GM18951 (cell line): ENCODE measurements at regions of chr20 and their contacts with region 1.

Region 1: DNA sequence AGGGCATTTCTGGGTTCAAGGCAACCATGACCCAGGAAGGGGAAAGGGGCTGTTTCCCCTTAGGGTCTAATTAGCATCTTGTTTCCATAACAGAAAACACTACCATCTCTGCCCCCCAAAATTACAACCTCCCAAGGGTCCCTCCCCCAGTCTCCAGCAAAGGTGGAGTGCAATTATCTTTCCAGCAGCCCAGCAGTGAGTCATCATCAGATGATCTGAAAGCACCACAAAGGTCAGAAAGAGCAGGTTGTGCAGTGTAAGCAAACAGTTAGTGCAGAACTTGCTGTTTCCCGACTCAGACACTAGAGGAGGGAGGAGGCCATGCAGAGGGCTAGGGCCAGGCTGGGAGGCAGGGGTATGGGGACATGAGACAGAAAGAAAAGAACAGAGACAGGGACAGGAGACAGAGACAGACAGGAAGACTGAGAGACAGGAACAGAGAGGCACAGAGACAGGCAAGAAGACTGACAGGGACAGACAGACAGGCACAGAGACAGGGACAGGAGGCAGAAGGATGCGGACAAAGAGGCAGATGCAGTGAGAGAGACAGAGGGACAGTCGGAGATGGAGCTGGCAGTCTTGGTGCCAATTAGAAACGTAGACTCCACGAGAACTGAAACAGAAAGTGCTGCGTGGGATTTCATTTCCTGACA is 62.5 kb downstream of the PYGB start:
- POLR2A ChIP-seq: peak; percentile 31

Region 2: GRCh38 chr20:25399037-25399430 is 88.6 kb after region 1 on chr20:
- in situ Hi-C with region 1: loop called (anchors 5 kb)
- POLR2A ChIP-seq: no peak

Region 3: DNA sequence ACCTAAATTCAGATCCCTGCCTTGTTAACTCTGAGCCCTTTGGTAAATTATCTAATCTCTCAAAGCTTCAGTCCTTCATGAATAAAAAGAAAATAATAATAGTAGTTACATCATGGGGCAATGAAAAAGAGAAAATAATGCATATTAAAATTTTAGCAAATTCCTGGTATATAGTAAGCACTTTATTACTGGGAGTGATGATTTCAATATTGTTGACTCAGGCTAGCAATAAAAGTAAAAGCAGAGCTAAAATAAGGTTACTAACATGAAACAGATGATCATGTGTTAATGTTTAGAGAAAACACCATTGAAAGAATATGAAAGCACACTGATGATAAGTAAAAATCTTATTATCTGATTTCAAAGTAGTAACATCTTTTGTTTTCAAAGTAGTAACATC is 110.7 kb after region 1 on chr20:
- in situ Hi-C with region 1: no loop called
- POLR2A ChIP-seq: no peak